ENCODE measurements at regions of chr3 and their contacts with region 1.

Region 1: GRCh38 chr3:73511571-73512525 is 112.9 kb downstream of the PDZRN3 start:
- DNase-seq: no peak
- ATAC-seq: no peak
- H3K4me3 ChIP-seq: no peak overlapping the region
- H3K27ac ChIP-seq: no peak overlapping the region
- H3K4me1 ChIP-seq: peaks cover 0 to 7% (median 3%) of the 10 kb centered on the region in 4 donors
- H3K27me3 ChIP-seq: no peaks in the 10 kb centered on the region
- CTCF ChIP-seq: no peak
- POLR2A ChIP-seq: no peak

Region 2: GRCh38 chr3:73637042-73637441 is 125.2 kb after region 1 on chr3:
- intact Hi-C with region 1: no loop called
- DNase-seq: no peak
- ATAC-seq: no peak
- H3K4me3 ChIP-seq: no peak overlapping the region
- H3K27ac ChIP-seq: no peak overlapping the region
- H3K4me1 ChIP-seq: no peaks in the 10 kb centered on the region
- H3K27me3 ChIP-seq: no peaks in the 10 kb centered on the region
- CTCF ChIP-seq: no peak
- POLR2A ChIP-seq: no peak

Region 3: GRCh38 chr3:73848173-73848906 is 336.5 kb after region 1 on chr3:
- intact Hi-C with region 1: loop called in 1 of 2 experiments (anchors 10 kb)
- DNase-seq: no peak
- ATAC-seq: peak; percentile 49 to 60 (median 54)
- H3K4me3 ChIP-seq: no peak overlapping the region
- H3K27ac ChIP-seq: no peak overlapping the region
- H3K4me1 ChIP-seq: no peaks in the 10 kb centered on the region
- H3K27me3 ChIP-seq: no peaks in the 10 kb centered on the region
- CTCF ChIP-seq: peak; percentile 44 to 71 (median 68)
- POLR2A ChIP-seq: no peak

Region 4: GRCh38 chr3:73966733-73967132 is 454.9 kb after region 1 on chr3:
- intact Hi-C with region 1: no loop called
- DNase-seq: no peak
- ATAC-seq: no peak
- H3K4me3 ChIP-seq: no peak overlapping the region
- H3K27ac ChIP-seq: no peak overlapping the region
- H3K4me1 ChIP-seq: no peaks in the 10 kb centered on the region
- H3K27me3 ChIP-seq: no peaks in the 10 kb centered on the region
- CTCF ChIP-seq: no peak
- POLR2A ChIP-seq: no peak

Measured in right lobe of liver (tissue), 6 donors.